IMR-90 (cell line): ENCODE measurements at regions of chr4 and their contacts with region 1.

Region 1: GRCh38 chr4:181528570-181529184 is 714.5 kb upstream of the TENM3 start:
- DNase-seq: peak; percentile 73
- ATAC-seq: peak; percentile 97
- H3K4me3 ChIP-seq: no peak overlapping the region
- H3K27ac ChIP-seq: no peak overlapping the region
- H3K4me1 ChIP-seq: no peaks in the 10 kb centered on the region
- H3K27me3 ChIP-seq: peaks cover 4% of the 10 kb centered on the region; the same call in 1 of the 2 replicates
- CTCF ChIP-seq: peak; percentile 91
- POLR2A ChIP-seq: no peak
- RAD21 ChIP-seq: peak; percentile 90

Region 2: GRCh38 chr4:180695851-180696250 is 832.8 kb before region 1 on chr4:
- CTCF ChIA-PET with region 1: no interaction called
- POLR2A ChIA-PET with region 1: no interaction called
- dilution Hi-C with region 1: no loop called
- in situ Hi-C with region 1: loop called (anchors 25 kb)
- intact Hi-C with region 1: no loop called
- DNase-seq: peak; percentile 97
- ATAC-seq: peak; percentile 85
- H3K4me3 ChIP-seq: no peak overlapping the region
- H3K27ac ChIP-seq: no peak overlapping the region
- H3K4me1 ChIP-seq: no peaks in the 10 kb centered on the region
- H3K27me3 ChIP-seq: no peaks in the 10 kb centered on the region
- CTCF ChIP-seq: no peak
- POLR2A ChIP-seq: no peak
- RAD21 ChIP-seq: no peak

Region 3: GRCh38 chr4:180828440-180829018 is 700.1 kb before region 1 on chr4:
- CTCF ChIA-PET with region 1: interaction called, 4 read pairs
- POLR2A ChIA-PET with region 1: no interaction called
- dilution Hi-C with region 1: no loop called
- in situ Hi-C with region 1: loop called (anchors 25 kb)
- intact Hi-C with region 1: loop called (anchors 1 kb)
- DNase-seq: peak; percentile 83
- ATAC-seq: peak; percentile 71
- H3K4me3 ChIP-seq: no peak overlapping the region
- H3K27ac ChIP-seq: no peak overlapping the region
- H3K4me1 ChIP-seq: 0 out of 2 replicates have a peak, but pooled peaks cover 2% of the 10 kb centered on the region
- H3K27me3 ChIP-seq: no peaks in the 10 kb centered on the region
- CTCF ChIP-seq: peak; percentile 86
- POLR2A ChIP-seq: no peak
- RAD21 ChIP-seq: peak; percentile 84

Region 4: DNA sequence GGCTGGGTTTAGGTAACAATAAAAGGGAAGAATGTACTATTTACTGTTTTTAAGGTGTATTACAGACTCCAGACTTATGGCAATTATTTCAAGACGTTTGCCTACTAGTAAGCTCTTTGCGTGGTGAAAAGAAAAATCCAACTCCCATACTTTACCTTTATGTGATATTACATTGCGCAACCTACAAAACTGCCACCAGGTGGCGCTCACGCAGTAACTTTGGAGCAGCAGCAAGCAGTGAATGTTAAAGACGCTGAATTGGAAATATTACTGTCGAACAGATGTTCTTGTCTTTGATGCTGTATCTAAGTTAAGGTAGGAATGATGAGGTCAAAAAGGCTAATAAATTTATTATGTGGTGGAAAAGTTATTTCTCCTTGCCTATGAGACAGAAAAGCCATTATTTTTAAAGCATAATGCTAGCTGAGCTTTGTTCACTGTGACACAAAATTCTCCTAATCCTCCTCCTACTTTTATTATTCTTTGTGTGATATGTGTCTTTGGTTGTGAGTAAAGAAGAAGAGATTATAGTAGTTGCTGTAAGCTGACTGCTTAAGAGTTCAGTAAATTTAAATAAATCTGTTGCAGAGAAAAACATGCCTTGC is 385.3 kb before region 1 on chr4:
- CTCF ChIA-PET with region 1: interaction called, 11 read pairs
- POLR2A ChIA-PET with region 1: no interaction called
- dilution Hi-C with region 1: no loop called
- in situ Hi-C with region 1: loop called (anchors 10 kb)
- intact Hi-C with region 1: loop called (anchors 1 kb)
- DNase-seq: peak; percentile 72
- ATAC-seq: peak; percentile 77
- H3K4me3 ChIP-seq: no peak overlapping the region
- H3K27ac ChIP-seq: no peak overlapping the region
- H3K4me1 ChIP-seq: no peaks in the 10 kb centered on the region
- H3K27me3 ChIP-seq: no peaks in the 10 kb centered on the region
- CTCF ChIP-seq: peak; percentile 91
- POLR2A ChIP-seq: no peak
- RAD21 ChIP-seq: peak; percentile 90

Region 5: DNA sequence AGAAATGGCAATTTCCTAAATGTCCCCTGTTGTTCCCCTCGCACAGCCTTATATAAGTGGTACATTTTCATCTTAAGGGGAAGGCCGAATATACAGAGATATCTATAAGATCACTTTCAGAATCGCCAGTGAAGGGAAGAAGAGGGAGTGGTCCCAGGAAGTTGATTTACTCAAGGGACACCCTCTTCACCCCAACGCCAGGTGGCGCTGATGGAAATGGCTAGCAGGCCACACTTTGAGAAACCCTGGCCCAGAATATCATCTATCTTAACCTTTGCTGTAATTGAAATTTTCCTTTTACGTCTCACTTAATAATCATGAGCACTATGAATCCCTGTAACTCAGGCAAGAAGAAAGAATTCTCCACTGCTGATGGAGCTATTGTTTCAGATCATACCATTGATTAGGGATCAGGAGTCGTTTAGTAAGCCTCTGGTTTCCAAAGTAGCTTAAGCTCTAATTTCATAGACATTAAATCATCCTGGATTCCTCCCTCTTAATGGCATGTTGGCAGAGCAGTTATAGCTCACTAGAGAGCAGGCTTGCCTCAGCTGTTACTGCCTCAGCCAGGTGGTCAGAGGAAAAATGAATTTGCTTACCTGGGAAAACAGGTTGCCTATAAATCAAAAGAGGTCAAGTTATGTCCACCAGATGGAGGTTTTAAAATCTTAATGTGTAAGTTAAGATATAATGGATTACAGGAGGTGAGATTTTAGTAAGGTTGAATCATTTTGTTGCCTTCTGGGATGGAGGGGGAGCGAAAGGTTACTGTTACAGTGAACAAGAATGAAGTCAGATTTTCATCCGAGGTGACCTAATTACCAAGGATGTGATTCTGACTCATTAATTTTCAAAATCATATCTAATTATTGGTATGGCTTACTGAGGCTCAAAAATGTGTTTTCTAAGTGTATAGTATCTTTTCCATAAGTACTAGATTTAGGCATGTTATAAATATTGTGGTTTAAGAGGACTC is 226.7 kb before region 1 on chr4:
- CTCF ChIA-PET with region 1: no interaction called
- POLR2A ChIA-PET with region 1: no interaction called
- dilution Hi-C with region 1: no loop called
- in situ Hi-C with region 1: no loop called
- intact Hi-C with region 1: loop called (anchors 1 kb)
- DNase-seq: peak; percentile 43
- ATAC-seq: peak; percentile 64; the same call in 1 of the 2 replicates
- H3K4me3 ChIP-seq: no peak overlapping the region
- H3K27ac ChIP-seq: no peak overlapping the region
- H3K4me1 ChIP-seq: no peaks in the 10 kb centered on the region
- H3K27me3 ChIP-seq: no peaks in the 10 kb centered on the region
- CTCF ChIP-seq: peak; percentile 61
- POLR2A ChIP-seq: no peak
- RAD21 ChIP-seq: peak; percentile 60

Region 6: DNA sequence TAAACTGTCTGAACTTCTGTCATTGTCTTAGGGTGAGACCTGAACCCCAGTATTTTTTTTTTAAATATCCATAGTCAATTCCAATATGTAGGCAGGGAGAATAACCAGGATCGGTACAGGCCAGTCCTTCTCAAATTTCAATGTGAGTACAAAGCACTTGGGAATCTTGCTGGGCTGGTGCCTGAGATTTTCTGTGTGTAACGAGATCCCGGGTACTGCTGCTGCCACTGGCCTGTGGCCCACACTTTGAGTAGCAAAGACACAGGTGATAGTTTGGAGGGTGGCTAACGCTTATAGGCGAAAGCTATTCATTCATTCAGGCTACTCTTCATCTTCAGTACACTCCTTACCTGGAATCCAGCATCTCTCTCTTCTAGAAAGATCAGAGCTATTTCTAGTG is 209.0 kb before region 1 on chr4:
- CTCF ChIA-PET with region 1: no interaction called
- POLR2A ChIA-PET with region 1: no interaction called
- dilution Hi-C with region 1: no loop called
- in situ Hi-C with region 1: loop called (anchors 10 kb)
- intact Hi-C with region 1: no loop called
- DNase-seq: no peak
- ATAC-seq: no peak
- H3K4me3 ChIP-seq: no peak overlapping the region
- H3K27ac ChIP-seq: no peak overlapping the region
- H3K4me1 ChIP-seq: no peaks in the 10 kb centered on the region
- H3K27me3 ChIP-seq: no peaks in the 10 kb centered on the region
- CTCF ChIP-seq: no peak
- POLR2A ChIP-seq: no peak
- RAD21 ChIP-seq: no peak